ENCODE measurements at regions of chr1 and their contacts with region 1.

Region 1: DNA sequence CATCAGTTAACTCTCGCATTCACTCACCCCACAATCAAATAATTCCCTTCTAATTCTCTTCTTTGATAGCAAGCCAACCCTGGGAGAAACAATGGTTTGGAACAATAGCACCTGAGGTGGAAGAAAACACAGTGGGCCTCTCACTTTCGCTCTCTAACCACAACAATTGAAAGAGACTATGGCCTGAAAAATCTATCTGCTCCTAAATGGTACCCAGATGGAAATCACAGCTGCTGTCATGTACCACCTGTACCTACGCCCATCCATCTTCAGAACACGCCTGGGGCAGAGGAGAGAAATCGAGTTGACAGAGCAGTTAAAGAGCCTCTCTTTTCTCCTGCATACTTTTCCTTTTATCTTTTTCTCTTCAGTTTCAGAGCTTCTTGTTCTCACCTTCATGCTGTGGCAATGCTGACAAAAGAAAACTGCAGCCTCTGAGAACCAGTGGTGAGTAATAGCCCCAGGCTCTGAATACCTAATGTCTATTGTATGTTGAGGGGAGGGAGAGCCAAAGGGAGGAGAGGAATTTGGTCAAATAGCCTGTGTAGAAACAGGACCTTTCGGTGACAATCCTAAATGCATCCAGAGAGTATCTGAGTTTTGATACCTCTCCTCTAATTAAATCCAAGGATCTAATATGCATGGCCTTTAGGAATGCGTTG is 57.7 kb downstream of the ZC3H11B start:
- DNase-seq: no peak
- H3K4me3 ChIP-seq: no peak overlapping the region
- H3K27ac ChIP-seq: no peak overlapping the region
- H3K4me1 ChIP-seq: no peaks in the 10 kb centered on the region
- H3K27me3 ChIP-seq: no peaks in the 10 kb centered on the region
- CTCF ChIP-seq: no peak
- EP300 ChIP-seq: no peak
- POLR2A ChIP-seq: no peak

Region 2: DNA sequence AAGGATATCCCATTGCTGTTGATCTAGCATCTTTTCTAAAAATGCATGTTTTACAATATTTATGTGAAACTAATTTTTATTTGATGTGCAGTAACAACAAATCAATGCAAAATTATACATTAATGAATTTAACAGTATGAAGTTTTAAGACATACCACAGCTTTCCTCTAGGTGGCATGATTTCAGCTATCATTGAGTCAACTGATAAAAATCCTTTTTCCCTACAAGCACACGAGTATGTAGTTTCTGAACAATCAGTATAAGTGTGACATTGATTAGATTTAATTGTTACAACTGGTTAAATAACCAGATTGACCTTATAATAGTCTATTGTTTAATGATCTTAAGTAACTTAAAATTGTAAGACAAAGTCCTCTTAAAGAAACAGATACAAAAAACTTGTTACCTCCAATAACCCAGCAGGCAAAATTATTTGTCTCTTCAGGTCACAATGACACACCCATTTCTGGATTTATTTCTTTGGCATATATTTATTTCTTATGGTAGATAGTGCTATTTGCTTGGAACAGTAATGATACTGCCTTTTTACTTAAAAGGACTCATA is 1215.8 kb before region 1 on chr1:
- intact Hi-C with region 1: loop called in 1 of 4 experiments (anchors 5 kb)
- DNase-seq: no peak
- H3K4me3 ChIP-seq: no peak overlapping the region
- H3K27ac ChIP-seq: no peak overlapping the region
- H3K4me1 ChIP-seq: no peaks in the 10 kb centered on the region
- H3K27me3 ChIP-seq: no peaks in the 10 kb centered on the region
- CTCF ChIP-seq: peak; percentile 50 to 63 (median 54)
- EP300 ChIP-seq: no peak
- POLR2A ChIP-seq: no peak

Region 3: GRCh38 chr1:219798283-219799030 is 243.3 kb after region 1 on chr1:
- intact Hi-C with region 1: no loop called
- DNase-seq: no peak
- H3K4me3 ChIP-seq: no peak overlapping the region
- H3K27ac ChIP-seq: no peak overlapping the region
- H3K4me1 ChIP-seq: no peaks in the 10 kb centered on the region
- H3K27me3 ChIP-seq: no peaks in the 10 kb centered on the region
- CTCF ChIP-seq: no peak
- EP300 ChIP-seq: no peak
- POLR2A ChIP-seq: no peak